ENCODE measurements at regions of chr3 and their contacts with region 1.

Region 1: GRCh38 chr3:72818092-72818773 is 30.0 kb downstream of the SHQ1 start:
- DNase-seq: peak in 1 of 10 donors; percentile 22
- H3K4me3 ChIP-seq: no peak overlapping the region
- H3K27ac ChIP-seq: peak overlapping the region in 17 of 59 donors; percentile 3 to 55 (median 29)
- H3K27me3 ChIP-seq: no peaks in the 10 kb centered on the region
- CTCF ChIP-seq: peak in 55 of 56 donors; percentile 47 to 87 (median 70)

Region 2: GRCh38 chr3:71710906-71711494 is 1107.2 kb before region 1 on chr3:
- intact Hi-C with region 1: loop called in 1 of 2 experiments (anchors 5 kb)
- DNase-seq: no peak
- H3K4me3 ChIP-seq: no peak overlapping the region
- H3K27ac ChIP-seq: peak overlapping the region in 16 of 59 donors; percentile 4 to 94 (median 40)
- H3K27me3 ChIP-seq: no peaks in the 10 kb centered on the region
- CTCF ChIP-seq: peak; percentile 32 to 86 (median 72)

Region 3: DNA sequence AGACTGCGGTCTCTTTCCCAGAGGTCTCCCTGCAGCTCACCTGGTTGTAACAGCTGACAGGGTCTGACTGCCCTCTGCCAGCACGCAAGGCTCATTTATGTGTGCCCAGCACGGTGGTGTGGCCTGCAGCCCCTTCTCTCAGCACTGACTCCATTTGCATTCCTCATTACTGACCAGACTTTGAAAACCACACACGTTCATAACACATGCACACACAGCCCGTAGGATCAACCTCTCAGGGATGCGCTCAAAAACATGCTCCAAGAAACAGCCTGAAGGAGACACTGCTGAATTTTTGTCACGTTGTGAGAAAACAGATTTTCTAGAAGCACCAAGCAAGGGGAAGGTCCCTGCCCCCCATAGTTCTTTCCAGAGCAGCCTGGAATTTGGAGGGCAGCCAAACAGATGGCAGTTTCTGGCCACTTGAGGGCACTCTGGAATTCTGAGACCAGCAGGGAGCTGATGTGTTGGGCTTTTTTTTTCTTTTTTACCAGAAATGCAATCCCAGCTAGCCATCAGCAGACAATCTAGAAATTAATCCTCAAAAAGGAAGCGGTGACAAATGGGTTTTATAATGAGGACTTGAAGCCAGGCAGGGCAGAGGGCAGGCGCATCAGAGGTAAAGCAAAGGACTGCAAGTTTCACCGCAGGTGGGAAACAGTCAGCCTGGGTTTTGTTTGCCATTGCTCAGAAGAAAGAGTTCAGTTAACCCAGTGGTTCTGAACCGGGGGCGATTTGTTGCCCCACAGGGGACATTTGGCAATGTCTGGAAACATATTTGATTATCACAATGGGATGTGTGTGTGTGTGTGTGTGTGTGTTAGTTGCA is 862.8 kb before region 1 on chr3:
- intact Hi-C with region 1: loop called (anchors 2 to 5 kb)
- DNase-seq: peak; percentile 66 to 87 (median 84)
- H3K4me3 ChIP-seq: peak overlapping the region in 22 of 59 donors; percentile 3 to 44 (median 20)
- H3K27ac ChIP-seq: peak overlapping the region in 42 of 59 donors; percentile 3 to 86 (median 52)
- H3K27me3 ChIP-seq: no peaks in the 10 kb centered on the region
- CTCF ChIP-seq: peak; percentile 68 to 95 (median 88)

Region 4: GRCh38 chr3:72270072-72270681 is 548.1 kb before region 1 on chr3:
- intact Hi-C with region 1: loop called in 1 of 2 experiments (anchors 10 kb)
- DNase-seq: peak in 1 of 10 donors; percentile 31
- H3K4me3 ChIP-seq: no peak overlapping the region
- H3K27ac ChIP-seq: peak overlapping the region in 40 of 59 donors; percentile 0 to 99 (median 90)
- H3K27me3 ChIP-seq: no peaks in the 10 kb centered on the region
- CTCF ChIP-seq: no peak

Region 5: DNA sequence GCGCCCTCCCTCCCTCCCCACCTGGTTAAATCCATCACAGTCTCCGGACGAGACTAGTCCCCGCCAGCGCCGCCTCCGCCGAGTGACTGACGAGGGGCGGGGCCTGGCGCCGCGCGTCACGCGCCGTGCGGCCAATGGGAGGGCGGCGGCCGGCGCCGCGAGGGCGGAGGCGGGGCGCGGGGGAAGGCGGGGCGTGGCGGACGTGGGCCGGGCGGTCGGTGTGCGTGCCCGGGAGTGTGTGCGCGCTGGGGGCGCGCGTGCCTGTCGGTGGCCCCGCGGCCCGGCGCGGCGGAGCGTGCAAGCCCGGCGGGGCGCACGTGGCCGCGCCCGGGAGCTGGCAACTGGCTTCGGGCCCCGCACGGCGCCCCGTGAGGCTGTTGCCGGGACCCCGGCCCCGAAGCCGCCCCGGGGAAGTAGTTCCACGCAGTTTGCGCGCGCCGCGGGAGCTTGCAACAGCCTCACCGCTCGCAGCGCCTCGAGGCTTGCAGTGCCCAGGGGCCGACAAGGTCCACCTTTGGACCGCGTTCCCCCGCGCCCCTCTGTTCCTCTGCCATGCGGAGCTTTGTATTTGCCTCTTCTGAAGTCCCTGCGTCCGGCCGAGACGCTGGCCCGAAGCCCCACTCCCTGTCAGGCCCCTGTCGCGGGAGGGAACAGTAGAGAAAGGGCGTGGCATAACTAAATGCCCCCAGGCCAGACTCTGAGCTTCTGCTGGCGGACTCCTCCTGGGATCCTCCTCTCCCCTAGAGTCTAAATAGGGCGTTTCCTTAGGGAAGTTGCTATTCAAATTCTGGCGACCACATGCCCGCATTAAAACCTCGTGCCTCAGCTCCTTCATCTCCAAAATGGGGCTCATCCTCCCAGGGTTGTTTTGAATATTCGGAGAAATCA is 370.9 kb before region 1 on chr3:
- intact Hi-C with region 1: loop called (anchors 5 kb)
- DNase-seq: peak; percentile 78 to 96 (median 89)
- H3K4me3 ChIP-seq: peak overlapping the region; percentile 61 to 96 (median 87)
- H3K27ac ChIP-seq: peak overlapping the region; percentile 45 to 96 (median 88)
- H3K27me3 ChIP-seq: no peaks in the 10 kb centered on the region
- CTCF ChIP-seq: peak in 3 of 56 donors; percentile 10 to 18 (median 11)

Region 6: DNA sequence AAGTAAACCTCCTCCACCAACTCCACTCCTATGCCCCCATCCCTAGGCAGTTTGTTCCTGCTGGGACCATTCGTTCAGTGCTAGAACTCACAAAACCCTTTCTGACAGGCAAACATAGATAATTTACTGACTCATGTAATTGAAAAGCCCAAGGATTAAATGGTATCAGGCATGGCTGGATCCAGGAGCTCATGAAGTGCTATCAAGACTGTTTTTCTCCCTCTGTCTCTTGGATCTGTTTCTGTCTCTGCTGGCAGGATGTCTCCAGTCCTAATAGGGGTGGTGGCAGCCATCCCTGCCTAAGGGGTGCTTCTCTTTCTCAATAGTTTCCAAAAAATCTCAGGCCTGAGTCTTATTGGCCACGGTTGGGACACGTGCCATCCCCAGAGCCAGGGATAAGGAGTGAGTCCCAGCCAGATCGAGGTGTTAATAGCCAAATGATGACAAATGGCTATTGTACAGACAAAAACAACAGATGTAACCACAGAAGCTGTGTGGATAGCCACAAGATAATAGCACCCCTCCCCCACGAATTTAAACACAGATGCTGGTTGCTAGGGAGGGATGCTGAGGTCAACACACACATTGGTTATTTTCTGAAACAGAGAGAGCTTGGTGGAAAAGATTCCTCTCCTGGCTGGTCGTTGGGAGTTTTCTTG is 138.6 kb before region 1 on chr3:
- intact Hi-C with region 1: loop called in 1 of 2 experiments (anchors 10 kb)
- DNase-seq: peak in 2 of 10 donors; percentile 41 to 49
- H3K4me3 ChIP-seq: no peak overlapping the region
- H3K27ac ChIP-seq: peak overlapping the region in 53 of 59 donors; percentile 7 to 88 (median 63)
- H3K27me3 ChIP-seq: no peaks in the 10 kb centered on the region
- CTCF ChIP-seq: no peak

Region 7: DNA sequence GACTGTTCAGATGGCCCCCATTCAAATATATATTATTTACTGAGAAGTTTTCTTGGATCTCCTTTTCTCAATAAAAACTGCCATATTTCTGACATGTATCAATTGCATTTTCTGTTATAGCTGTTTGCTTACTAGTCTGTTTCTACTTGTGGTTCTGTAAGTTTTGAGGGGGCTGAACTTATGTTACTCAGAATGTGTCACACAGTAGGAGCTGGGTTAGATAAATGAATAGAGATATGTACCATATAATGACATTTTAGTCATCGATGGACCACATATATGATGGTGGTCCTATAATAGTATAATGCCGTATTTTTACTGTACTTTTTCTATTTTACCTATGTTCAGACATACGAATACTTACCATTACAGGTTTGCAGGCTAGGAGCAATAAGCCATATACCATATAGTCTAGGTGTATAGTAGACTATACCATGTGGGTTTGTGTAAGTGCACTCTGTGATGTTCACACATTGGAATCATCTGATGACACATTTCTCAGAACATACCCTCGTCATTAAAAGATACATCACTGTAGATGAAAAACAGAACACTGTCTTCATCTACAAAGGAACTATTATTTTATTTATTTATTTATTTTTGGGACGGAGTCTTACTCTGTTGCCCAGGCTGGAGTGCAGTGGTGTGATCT is 200.7 kb after region 1 on chr3:
- intact Hi-C with region 1: no loop called
- DNase-seq: no peak
- H3K4me3 ChIP-seq: no peak overlapping the region
- H3K27ac ChIP-seq: peak overlapping the region in 8 of 59 donors; percentile 13 to 59 (median 44)
- H3K27me3 ChIP-seq: no peaks in the 10 kb centered on the region
- CTCF ChIP-seq: no peak

Region 8: DNA sequence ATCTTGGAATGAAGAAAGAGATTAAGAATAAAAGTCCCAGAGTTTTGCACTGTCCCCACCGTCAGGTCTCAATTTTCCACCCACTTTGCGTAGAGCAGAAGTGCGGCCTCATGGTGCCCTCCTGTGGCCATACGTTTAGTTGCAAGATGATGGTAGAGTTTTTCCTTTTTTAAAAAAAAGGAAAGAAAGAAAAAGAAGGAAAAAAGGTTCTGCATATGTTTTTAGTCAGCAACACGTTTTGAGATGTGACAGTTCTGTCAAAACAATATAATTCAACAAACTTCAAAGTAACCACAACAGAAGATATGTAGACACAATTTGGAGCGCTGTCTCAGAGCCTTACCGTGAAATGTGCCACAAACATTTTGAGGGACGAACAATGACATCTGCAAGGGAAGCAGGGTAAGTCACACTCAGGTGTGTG is 267.9 kb after region 1 on chr3:
- intact Hi-C with region 1: loop called in 1 of 2 experiments (anchors 10 kb)
- DNase-seq: peak in 6 of 10 donors; percentile 32 to 57 (median 43)
- H3K4me3 ChIP-seq: peak overlapping the region in 16 of 59 donors; percentile 2 to 47 (median 22)
- H3K27ac ChIP-seq: no peak overlapping the region
- H3K27me3 ChIP-seq: no peaks in the 10 kb centered on the region
- CTCF ChIP-seq: peak; percentile 59 to 94 (median 81)

Region 9: GRCh38 chr3:73324203-73325155 is 506.2 kb after region 1 on chr3:
- intact Hi-C with region 1: no loop called
- DNase-seq: no peak
- H3K4me3 ChIP-seq: no peak overlapping the region
- H3K27ac ChIP-seq: no peak overlapping the region
- H3K27me3 ChIP-seq: no peaks in the 10 kb centered on the region
- CTCF ChIP-seq: no peak

Measured in dorsolateral prefrontal cortex (tissue), 120 donors.